PC-9 (cell line): ENCODE measurements at regions of chr9 and their contacts with region 1.

Region 1: DNA sequence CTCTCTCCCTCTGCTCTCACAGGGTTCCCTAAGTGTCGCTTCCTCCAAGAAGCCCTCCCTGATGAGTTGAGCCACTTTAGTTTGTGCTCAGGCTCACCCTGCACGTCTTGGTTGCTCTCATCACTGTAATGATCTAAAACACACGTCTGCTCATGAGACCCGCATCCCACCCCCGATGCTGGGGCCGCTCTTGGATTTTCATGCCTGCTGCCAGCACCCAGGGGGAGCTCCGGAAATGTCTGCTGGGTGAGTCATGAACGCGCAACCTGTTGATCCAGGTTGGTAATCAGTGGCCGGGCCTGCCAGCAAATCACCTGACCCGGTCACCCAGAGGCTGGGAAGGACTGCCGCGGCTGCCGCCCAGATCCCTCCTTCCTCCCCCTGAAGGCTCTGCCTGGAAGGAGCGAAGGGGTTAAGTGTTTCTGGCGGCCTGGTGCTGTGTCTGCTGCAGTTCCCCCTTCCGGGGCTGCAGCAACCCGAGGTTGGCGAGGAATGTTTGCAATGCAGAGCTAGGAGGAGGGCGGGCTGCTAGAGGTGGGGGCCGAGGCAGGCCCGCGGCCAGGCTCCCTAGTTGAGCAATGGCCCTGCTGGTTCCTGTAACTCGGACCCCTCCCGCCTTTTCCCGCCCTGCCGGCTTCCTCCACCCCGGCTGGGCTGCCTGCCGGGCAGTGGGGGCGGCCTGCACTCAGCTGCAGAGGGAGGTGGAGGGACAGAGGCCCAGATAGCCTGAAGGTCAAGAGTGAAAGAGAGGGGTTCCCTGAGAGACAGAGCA is 156.1 kb upstream of the IER5L start:
- DNase-seq: peak; percentile 98 to 99
- H3K4me3 ChIP-seq: peak overlapping the region; percentile 43; the same call in 1 of the 2 replicates
- H3K27ac ChIP-seq: peak overlapping the region; percentile 94
- H3K4me1 ChIP-seq: peaks cover 45% of the 10 kb centered on the region
- H3K27me3 ChIP-seq: no peaks in the 10 kb centered on the region
- CTCF ChIP-seq: no peak; the same call in 1 of the 2 replicates

Region 2: GRCh38 chr9:128825923-128826702 is 508.0 kb before region 1 on chr9:
- CTCF ChIA-PET with region 1: no interaction called
- POLR2A ChIA-PET with region 1: no interaction called
- intact Hi-C with region 1: no loop called
- DNase-seq: no peak
- H3K4me3 ChIP-seq: no peak overlapping the region
- H3K27ac ChIP-seq: no peak overlapping the region
- H3K4me1 ChIP-seq: peaks cover 9% of the 10 kb centered on the region
- H3K27me3 ChIP-seq: no peaks in the 10 kb centered on the region
- CTCF ChIP-seq: no peak

Region 3: GRCh38 chr9:129139993-129140396 is 194.1 kb before region 1 on chr9:
- CTCF ChIA-PET with region 1: interaction called, 3 read pairs
- POLR2A ChIA-PET with region 1: no interaction called
- intact Hi-C with region 1: loop called (anchors 1 kb)
- DNase-seq: peak; percentile 85 to 95
- H3K4me3 ChIP-seq: peak overlapping the region; percentile 91
- H3K27ac ChIP-seq: peak overlapping the region; percentile 100
- H3K4me1 ChIP-seq: peaks cover 43% of the 10 kb centered on the region
- H3K27me3 ChIP-seq: no peaks in the 10 kb centered on the region
- CTCF ChIP-seq: no peak

Region 4: DNA sequence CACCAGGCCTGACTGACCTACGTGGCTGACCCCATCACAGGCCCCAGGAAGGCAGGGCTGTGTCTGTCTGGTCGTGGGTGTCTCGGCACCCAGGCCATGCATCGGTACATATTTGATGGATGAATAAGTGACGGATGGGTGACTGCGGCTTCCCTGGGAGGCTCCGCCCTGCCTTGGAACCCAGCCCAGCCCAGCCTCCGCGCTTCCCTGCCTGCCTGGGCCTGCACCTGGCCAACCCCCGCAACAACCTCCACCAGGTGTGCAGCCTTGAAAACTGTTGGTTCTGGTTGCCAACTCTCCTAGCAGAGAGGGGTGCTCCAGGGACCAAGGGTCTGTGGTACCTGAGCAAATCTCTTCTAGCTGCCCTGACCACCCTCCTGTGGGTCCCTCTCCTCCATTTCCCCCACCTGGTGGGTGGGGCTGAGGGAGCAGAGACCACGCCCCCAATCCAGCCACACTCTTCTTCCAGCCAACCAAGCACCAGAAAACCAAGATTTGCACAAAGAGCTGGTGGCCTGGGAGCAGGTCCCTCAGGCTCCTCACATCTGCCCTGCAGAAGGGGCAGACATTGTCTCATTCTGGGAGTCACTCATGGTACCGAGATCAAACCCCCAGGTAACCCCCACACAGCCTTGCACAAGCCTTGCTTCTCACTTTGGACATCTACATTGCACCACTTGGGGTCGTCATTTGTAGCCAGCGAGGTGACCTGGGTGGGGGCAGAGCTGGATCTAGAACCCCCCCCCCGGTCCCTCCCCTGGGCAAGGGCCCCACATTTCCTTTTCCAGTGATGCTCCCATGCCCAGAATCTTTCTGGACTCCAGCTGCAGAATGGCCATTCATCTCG is 55.5 kb before region 1 on chr9:
- CTCF ChIA-PET with region 1: interaction called, 6 read pairs
- POLR2A ChIA-PET with region 1: interaction called, 10 read pairs
- intact Hi-C with region 1: loop called (anchors 1 kb)
- DNase-seq: peak; percentile 86 to 97
- H3K4me3 ChIP-seq: peak overlapping the region; percentile 58; the same call in 1 of the 2 replicates
- H3K27ac ChIP-seq: peak overlapping the region; percentile 79
- H3K4me1 ChIP-seq: peaks cover 51% of the 10 kb centered on the region
- H3K27me3 ChIP-seq: no peaks in the 10 kb centered on the region
- CTCF ChIP-seq: no peak

Region 5: GRCh38 chr9:129383561-129384416 is 49.6 kb after region 1 on chr9:
- CTCF ChIA-PET with region 1: interaction called, 7 read pairs
- POLR2A ChIA-PET with region 1: interaction called, 5 read pairs
- intact Hi-C with region 1: loop called (anchors 1 kb)
- DNase-seq: peak; percentile 50 to 68
- H3K4me3 ChIP-seq: peak overlapping the region; percentile 85
- H3K27ac ChIP-seq: peak overlapping the region; percentile 96
- H3K4me1 ChIP-seq: peaks cover 22% of the 10 kb centered on the region
- H3K27me3 ChIP-seq: no peaks in the 10 kb centered on the region
- CTCF ChIP-seq: no peak

Region 6: DNA sequence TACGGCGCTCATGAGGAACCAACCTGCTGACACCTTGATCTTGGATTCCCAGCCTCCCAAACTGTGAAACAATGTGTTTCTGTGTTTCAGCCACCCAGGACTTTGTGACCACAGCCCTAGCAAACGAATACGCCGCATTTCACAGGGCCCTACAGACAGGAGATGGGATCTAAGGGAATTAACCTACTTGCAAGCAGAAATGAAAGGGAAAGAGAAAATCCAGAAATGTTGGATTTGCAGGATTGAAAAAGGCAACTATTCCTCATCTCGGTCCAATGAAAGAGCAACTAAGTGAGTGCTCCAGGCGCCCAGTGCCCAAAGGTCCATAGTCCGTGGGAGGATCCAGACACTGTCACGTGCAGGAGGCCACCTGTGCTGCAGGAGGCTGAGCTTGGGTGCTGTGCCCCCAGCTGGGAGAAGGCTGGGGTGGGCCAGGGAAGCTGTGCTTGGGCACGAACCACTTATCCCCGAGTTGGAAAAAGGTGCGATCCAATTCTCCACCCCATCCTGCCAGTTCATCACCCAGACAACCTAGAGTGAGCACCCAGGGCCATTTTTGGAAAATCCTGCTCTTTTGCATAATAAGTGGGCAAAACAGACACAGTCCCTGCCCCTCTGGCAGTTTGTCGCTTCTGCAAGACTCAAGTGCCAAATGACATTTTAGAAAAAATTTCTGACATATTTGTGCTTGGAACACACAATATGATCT is 108.8 kb after region 1 on chr9:
- CTCF ChIA-PET with region 1: no interaction called
- POLR2A ChIA-PET with region 1: interaction called, 17 read pairs
- intact Hi-C with region 1: no loop called
- DNase-seq: no peak
- H3K4me3 ChIP-seq: no peak overlapping the region
- H3K27ac ChIP-seq: no peak overlapping the region
- H3K4me1 ChIP-seq: no peaks in the 10 kb centered on the region
- H3K27me3 ChIP-seq: peaks cover 7% of the 10 kb centered on the region; the same call in 1 of the 2 replicates
- CTCF ChIP-seq: no peak